ENCODE measurements at regions of chr6 and their contacts with region 1.

Region 1: DNA sequence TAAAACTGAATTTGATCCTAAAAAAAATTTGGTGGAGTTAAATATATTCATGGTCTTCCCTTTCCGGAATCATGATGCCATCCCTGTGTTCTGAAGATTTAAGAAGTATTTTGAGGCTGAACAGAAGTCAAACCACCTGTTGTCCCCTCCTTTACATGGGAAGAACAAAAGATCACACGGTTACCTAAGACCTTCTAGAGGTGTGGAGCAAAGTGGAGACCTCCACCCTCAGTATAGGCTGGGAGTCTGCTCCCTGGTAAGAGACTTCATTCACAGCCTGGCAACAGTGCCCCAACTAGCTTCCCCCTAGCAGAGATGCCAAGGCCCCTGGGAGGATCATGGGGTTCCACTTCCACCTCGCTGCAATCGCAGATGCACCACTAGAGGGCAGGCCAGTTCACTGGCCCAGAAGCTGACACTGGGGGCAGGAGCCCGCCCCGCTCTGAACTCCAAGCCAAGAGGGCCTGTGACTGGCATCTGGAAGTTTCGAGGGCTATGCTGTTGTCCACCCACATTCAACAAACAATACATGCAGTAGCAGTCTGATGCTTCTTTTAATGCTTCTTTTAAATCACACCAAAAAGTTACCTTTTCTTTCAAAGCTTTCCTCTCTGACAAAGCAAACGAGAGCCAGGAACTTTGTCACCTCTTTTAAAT is 19.5 kb upstream of the UBE2J1 start:
- H3K4me3 ChIP-seq: no peak overlapping the region
- H3K27ac ChIP-seq: no peak overlapping the region
- H3K4me1 ChIP-seq: peaks cover 11% of the 10 kb centered on the region
- CTCF ChIP-seq: peak; percentile 76

Region 2: DNA sequence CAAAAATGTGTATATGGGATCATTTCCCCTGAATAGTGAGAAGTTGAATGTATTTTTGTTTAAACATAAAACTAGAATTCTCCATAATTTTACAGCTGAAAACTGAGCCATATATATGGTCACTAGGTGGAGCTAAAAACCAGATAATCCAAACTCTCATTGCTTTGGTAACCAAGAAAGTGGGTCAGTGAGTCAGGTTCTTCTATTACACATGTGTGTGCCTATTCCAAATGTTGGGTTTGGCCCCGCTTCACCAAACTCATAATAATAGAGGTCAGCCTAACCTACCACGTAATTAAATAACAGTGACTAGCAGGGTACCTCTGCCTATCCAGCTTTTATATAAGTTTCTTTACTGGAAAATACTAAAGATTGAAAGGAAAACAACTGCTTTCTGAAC is 389.3 kb before region 1 on chr6:
- CTCF ChIA-PET with region 1: interaction called, 28 read pairs
- POLR2A ChIA-PET with region 1: no interaction called
- H3K4me3 ChIP-seq: no peak overlapping the region
- H3K27ac ChIP-seq: no peak overlapping the region
- H3K4me1 ChIP-seq: no peaks in the 10 kb centered on the region
- CTCF ChIP-seq: peak; percentile 50; the same call in 1 of the 2 replicates

Region 3: GRCh38 chr6:89281779-89282246 is 90.2 kb before region 1 on chr6:
- CTCF ChIA-PET with region 1: interaction called, 24 read pairs
- POLR2A ChIA-PET with region 1: no interaction called
- H3K4me3 ChIP-seq: no peak overlapping the region
- H3K27ac ChIP-seq: no peak overlapping the region
- H3K4me1 ChIP-seq: no peaks in the 10 kb centered on the region
- CTCF ChIP-seq: peak; percentile 66

Region 4: DNA sequence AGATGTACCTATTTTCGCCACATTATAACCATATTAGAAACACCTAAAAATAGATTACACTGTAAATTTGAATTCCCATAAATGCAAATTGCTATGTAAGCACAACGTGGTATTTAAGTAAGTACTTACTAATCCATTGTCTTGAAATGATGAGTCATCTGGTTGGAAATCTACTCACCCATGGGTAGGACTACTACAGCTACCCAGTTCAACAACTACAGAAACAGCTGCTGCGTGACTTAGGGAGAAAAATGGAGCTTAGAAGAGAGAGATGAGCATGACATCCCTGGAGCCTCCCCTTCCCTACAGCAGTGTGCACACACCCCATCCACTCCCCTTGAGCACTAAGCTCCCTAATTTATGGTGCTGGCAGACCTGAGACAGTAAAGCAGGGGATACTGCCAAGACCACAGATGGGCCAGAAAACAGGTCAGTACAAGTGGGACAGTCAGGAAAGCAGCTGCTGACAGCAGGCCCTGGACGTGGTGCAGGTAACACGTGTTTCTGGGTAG is 13.2 kb after region 1 on chr6:
- CTCF ChIA-PET with region 1: interaction called, 19 read pairs
- POLR2A ChIA-PET with region 1: interaction called, 3 read pairs
- H3K4me3 ChIP-seq: no peak overlapping the region
- H3K27ac ChIP-seq: no peak overlapping the region
- H3K4me1 ChIP-seq: no peaks in the 10 kb centered on the region; the same call in 1 of the 2 replicates
- CTCF ChIP-seq: no peak

Region 5: GRCh38 chr6:89432875-89433251 is 60.9 kb after region 1 on chr6 and contains the start of gene ANKRD6:
- CTCF ChIA-PET with region 1: interaction called, 37 read pairs
- POLR2A ChIA-PET with region 1: no interaction called
- H3K4me3 ChIP-seq: peak within 1 kb of the TSS; percentile 83
- H3K27ac ChIP-seq: peak within 1 kb of the TSS; percentile 86
- H3K4me1 ChIP-seq: peaks cover 24% of the 10 kb centered on the region
- CTCF ChIP-seq: peak; percentile 42

Region 6: DNA sequence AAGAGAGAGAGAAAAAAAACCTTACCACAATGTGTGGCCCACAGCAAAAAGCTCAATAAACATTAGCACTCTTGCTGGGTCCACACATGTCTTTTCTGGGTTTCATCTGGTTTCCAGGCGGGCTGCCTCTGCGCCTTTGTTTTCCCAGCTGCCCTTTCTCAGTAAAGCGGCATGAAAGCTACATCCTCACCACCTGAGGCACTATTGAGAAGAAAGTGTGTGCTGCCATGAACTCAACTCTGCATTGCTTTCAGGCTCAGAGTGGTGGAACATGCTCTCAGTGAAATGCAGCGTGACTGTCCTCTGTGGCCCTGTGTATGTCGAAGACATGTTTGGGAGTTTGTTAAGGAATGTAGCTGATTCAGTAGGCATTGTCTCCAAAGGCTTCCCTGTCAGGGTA is 164.3 kb after region 1 on chr6:
- CTCF ChIA-PET with region 1: no interaction called
- POLR2A ChIA-PET with region 1: no interaction called
- H3K4me3 ChIP-seq: no peak overlapping the region
- H3K27ac ChIP-seq: no peak overlapping the region
- H3K4me1 ChIP-seq: no peaks in the 10 kb centered on the region
- CTCF ChIP-seq: no peak

Region 7: DNA sequence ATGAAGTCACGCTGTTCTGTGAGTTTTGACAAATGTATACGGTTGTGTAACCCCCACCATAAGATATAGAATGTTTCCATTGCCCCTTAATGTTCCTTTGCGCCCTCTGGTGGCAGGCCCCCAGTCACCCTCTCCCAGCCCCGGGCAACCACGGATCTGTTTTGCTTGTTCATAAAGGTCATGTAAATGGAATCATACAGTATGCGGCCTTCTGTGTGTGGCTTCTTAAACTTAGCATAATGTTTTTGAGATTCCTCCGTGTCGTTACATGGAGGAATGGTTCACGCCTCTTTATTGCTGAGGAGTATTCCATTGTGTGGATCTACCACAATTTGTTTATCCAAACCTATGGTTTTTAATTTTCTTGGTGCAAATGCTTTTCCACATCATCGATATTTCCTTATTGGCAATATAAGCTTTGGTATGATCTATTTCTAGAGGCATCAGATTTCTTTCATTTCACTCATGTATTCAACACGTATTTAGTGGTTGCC is 238.2 kb after region 1 on chr6:
- CTCF ChIA-PET with region 1: interaction called, 14 read pairs
- POLR2A ChIA-PET with region 1: no interaction called
- H3K4me3 ChIP-seq: no peak overlapping the region
- H3K27ac ChIP-seq: no peak overlapping the region
- H3K4me1 ChIP-seq: no peaks in the 10 kb centered on the region
- CTCF ChIP-seq: peak; percentile 47